GM13977 (cell line): ENCODE measurements at regions of chr14 and their contacts with region 1.

Region 1: DNA sequence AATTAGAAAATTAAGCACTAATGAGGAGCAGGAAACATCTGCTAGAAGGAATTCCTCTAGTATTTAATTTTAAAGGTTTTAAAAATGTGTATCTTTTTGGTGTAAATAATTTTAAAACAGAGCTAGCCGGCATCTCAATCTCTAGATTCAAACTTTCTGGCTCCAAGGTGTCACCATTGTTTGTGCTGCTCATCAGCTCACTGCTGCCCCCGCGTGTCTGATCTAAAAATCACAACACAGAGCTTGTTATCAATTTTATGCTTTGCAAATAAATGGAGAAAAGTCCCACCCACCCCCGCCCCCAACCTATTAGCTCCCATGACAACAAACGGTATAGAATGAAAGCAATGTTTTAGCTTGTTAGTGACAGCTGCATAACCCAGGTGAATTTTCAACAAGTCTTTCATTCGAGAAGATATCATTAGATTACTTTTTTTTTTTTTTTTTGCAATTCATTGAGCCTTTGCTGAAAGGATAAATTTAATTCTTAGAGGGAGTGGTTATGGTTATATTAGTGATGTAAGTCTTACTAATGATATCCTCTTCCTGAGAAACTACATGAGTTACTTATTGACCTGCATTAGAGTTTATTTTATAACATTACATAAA is 11.3 kb upstream of the ABHD12B start:
- DNase-seq: peak; percentile 83
- CTCF ChIP-seq: peak; percentile 73

Region 2: GRCh38 chr14:50599700-50600444 is 260.7 kb before region 1 on chr14:
- in situ Hi-C with region 1: loop called (anchors 25 kb)
- DNase-seq: peak; percentile 18
- CTCF ChIP-seq: peak; percentile 62

Region 3: DNA sequence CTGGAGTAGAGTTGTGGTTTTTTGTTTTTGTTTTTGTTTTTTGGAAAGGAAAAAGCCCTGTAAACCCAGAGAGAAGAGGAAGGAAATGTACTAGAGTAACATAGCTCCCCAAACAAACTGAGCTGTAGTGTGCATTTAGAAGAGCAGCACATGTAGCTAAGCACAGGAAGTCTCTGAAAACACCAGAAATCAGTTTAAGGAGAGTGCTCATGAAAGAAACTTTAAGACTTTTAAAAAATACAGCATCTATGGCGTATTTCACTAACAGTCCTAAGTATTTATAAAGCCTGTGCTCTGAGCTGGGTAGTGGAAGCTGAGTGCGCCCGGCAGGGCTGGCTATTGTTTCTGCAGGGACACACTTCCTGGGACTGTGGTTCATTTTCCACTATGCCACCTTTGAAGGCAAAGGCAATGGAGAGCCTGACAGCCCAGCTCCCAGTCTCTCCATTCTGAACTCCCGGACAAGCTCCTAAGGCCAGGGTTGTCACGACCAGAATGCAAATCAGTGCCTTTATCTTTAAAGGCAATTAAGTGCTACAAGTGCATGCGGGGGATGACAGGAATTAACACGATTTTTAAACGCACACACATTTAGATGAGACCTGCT is 75.0 kb before region 1 on chr14:
- in situ Hi-C with region 1: loop called (anchors 10 kb)
- DNase-seq: no peak
- CTCF ChIP-seq: no peak